Left ventricle myocardium superior (tissue), 1 donor: ENCODE measurements at regions of chr18 and their contacts with region 1.

Region 1: DNA sequence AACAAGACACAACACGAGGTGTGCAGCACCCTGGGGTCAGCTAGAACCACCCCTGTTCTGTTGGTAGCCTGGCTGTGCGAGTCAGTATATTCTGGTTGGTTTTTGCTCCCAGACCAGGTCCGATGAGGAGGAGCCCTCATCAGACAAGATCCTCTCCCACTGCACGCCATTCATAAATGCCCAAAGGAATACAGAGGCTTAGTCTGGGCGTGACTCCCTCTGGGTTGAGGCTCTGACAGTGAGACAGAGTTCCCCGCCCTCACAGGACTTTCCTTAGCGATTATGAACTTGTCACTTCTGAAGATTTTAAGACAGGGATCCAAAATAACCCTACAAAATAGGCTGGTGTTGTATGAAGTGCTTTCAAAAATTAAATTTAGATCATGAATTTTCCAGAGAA is 85.5 kb upstream of the MC2R start:
- DNase-seq: no peak
- ATAC-seq: no peak

Region 2: DNA sequence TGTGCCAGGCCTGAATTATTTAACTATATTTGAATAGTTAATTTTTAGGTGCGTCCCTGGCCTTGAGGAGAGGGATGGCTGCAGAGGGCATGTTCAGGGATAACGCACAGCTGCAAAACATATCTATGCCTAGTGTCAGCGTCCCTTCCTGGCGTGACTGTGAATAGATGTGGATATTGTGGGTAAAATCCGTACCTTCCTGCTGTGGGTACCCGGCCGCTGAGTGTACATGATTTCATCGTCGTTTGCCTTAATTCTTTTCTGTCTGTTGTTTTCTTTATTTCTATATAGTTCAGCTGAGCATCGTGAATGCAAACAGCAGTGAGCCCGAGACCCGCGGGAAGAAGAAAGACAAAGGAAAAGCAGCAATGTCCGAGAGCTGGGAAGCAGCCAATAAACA is 60.6 kb before region 1 on chr18:
- intact Hi-C with region 1: loop called (anchors 10 kb)
- DNase-seq: no peak
- ATAC-seq: no peak

Region 3: GRCh38 chr18:14053661-14054060 is 52.8 kb after region 1 on chr18:
- intact Hi-C with region 1: no loop called
- DNase-seq: no peak
- ATAC-seq: no peak